Vagina (tissue), 2 donors: ENCODE measurements at regions of chr10 and their contacts with region 1.

Region 1: DNA sequence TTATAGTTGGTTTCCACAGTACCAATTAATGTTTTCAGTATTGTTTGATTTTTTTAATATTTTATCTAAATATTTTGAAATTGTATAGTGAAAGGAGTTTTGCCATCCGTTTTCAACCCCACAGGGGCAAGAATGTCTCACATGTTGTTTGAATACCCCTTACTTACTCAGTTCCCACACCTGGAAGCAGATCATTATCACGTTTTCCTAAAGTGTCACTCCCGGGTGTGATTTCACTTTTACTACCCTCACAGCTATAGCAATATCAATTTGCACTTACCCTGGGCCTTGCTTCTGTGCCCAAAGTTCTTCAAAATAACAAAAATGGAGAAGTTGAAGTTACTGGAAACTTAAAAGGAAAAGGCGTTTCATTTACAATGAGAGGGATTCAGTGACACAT is 228.1 kb downstream of the CSTF2T start:
- DNase-seq: no peak
- H3K4me3 ChIP-seq: no peak overlapping the region
- H3K27ac ChIP-seq: no peak overlapping the region
- H3K4me1 ChIP-seq: peaks cover 4% of the 10 kb centered on the region
- H3K27me3 ChIP-seq: no peaks in the 10 kb centered on the region
- CTCF ChIP-seq: no peak
- POLR2A ChIP-seq: no peak

Region 2: GRCh38 chr10:51074238-51075028 is 396.8 kb before region 1 on chr10 and contains the start of gene PRKG1:
- intact Hi-C with region 1: no loop called
- DNase-seq: peak in 1 of 2 donors; percentile 91
- H3K4me3 ChIP-seq: peak within 1 kb of the TSS; percentile 60 to 76
- H3K27ac ChIP-seq: peak within 1 kb of the TSS; percentile 91
- H3K4me1 ChIP-seq: peaks cover 7% of the 10 kb centered on the region
- H3K27me3 ChIP-seq: no peaks in the 10 kb centered on the region
- CTCF ChIP-seq: no peak
- POLR2A ChIP-seq: peak in 1 of 2 donors; percentile 19
- total RNA-seq, gene PRKG1: 17.9 TPM

Region 3: DNA sequence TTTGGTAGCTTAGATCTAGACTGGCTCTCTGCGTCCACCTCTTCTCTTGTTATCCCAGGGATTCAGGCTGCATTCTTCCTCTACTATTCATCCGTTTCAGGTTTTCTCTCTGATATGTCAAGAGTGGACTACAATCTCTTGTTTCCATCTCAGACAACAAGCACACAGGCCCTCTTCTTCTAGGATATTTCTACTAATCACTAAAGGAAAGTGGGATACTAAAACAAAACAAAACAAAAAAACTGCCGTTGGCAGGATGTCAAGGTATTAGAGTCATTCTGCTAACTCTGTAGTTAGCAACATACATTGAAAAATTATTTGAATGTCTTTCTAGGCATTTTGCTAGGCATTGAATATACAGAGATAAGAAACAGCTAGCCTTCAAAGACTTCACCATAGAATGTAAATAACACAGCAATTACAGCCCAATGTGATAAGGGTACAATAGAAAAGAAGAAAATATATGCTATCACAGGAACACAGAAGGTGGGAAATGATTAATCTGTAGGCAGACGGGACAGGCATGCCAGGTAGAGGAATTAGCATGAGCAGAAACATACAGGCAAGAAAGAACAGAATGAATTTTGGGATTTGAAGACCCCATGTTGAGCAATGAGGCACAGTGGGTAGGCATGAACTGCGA is 17.6 kb after region 1 on chr10:
- intact Hi-C with region 1: loop called (anchors 1 kb)
- DNase-seq: no peak
- H3K4me3 ChIP-seq: no peak overlapping the region
- H3K27ac ChIP-seq: no peak overlapping the region
- H3K4me1 ChIP-seq: no peaks in the 10 kb centered on the region
- H3K27me3 ChIP-seq: no peaks in the 10 kb centered on the region
- CTCF ChIP-seq: no peak
- POLR2A ChIP-seq: no peak

Region 4: GRCh38 chr10:51585742-51586141 is 114.5 kb after region 1 on chr10:
- intact Hi-C with region 1: no loop called
- DNase-seq: no peak
- H3K4me3 ChIP-seq: no peak overlapping the region
- H3K27ac ChIP-seq: no peak overlapping the region
- H3K4me1 ChIP-seq: no peaks in the 10 kb centered on the region
- H3K27me3 ChIP-seq: no peaks in the 10 kb centered on the region
- CTCF ChIP-seq: no peak
- POLR2A ChIP-seq: no peak